ENCODE measurements at regions of chr5 and their contacts with region 1.

Region 1: DNA sequence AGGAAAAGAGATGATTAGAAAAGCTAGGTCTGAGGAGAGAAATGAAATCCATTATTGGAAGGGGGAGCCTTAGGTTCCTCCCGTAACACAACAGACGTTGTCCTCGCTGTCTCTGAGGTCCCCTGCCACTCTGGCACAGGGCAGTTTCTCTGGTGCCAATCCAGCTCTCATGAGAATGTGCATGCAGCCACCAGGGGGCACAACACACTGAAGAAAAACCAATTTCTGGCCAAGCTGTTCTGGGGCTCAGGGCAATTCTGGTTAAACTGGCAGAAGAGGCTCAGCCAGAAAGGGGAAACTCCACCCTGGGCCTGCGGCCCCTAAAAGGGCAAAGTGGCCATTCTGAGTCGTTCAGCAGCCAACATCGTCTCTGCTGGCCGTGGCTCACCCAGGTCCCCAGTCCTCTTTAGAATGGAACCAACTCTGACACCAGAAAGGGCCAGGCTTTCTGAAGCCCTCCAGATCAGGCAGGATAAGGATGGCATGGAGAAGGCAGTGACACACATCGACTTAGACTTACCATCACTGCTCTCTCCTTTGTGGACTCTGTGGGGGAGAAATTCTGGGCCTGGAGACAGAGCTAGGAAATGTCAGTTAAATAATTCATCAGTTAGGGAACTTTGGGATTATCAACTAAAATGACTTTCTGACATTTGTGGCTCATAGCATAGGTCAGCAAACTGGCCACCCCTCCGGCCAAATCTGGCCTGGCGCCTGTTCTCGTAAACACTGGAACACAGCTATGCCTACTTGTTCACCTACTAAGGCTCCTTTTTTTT is 58.5 kb upstream of the GOLPH3 start:
- DNase-seq: peak; percentile 62

Region 2: GRCh38 chr5:32206509-32207354 is 25.9 kb before region 1 on chr5:
- CTCF ChIA-PET with region 1: no interaction called
- POLR2A ChIA-PET with region 1: no interaction called
- DNase-seq: no peak

Region 3: GRCh38 chr5:32329308-32329834 is 96.7 kb after region 1 on chr5:
- CTCF ChIA-PET with region 1: interaction called, 29 read pairs
- POLR2A ChIA-PET with region 1: no interaction called
- DNase-seq: peak; percentile 77

Measured in HEK293T (cell line).